ENCODE measurements at regions of chrX and their contacts with region 1.

Region 1: DNA sequence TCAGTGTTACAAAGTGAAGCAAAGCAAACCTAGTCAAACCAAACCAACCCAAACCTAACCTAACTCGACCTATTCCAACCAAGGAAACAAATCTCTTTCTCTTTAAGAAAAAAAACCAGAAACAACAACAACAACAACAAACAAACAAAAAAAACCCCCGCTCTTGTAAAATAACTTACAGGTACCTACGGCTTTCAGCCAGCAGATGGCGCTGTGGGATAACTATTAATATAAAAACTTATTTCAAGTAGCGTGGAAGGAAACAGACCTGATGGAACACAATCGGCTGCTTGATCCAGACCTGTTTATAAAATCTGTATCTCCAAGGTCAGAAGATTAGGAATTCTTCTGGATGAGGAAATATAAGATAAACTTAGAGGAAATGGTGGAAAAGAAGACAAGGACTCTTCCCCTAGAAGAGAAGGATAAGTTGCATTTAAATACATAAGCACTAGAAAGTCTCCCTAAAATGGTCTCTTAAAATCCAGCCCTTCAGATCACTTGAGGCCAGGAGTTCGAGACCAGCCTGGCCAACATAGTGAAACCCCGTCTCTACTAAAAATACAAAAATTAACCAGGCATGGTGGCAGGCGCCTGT is 34.4 kb upstream of the CDKL5 start:
- DNase-seq: peak; percentile 38 to 56
- H3K4me3 ChIP-seq: no peak overlapping the region
- H3K4me3 Mint-ChIP-seq: no peak overlapping the region
- H3K27ac Mint-ChIP-seq: no peak overlapping the region
- H3K4me1 ChIP-seq: no peaks in the 10 kb centered on the region
- H3K4me1 Mint-ChIP-seq: no peaks in the 10 kb centered on the region
- H3K27me3 ChIP-seq: no peaks in the 10 kb centered on the region
- H3K27me3 Mint-ChIP-seq: no peaks in the 10 kb centered on the region
- CTCF ChIP-seq: peak; percentile 53 to 60

Region 2: GRCh38 chrX:17944833-17945497 is 446.1 kb before region 1 on chrX:
- CTCF ChIA-PET with region 1: no interaction called
- POLR2A ChIA-PET with region 1: no interaction called
- intact Hi-C with region 1: no loop called
- DNase-seq: peak in 1 of 2 experiments; percentile 4
- H3K4me3 ChIP-seq: no peak overlapping the region
- H3K4me3 Mint-ChIP-seq: no peak overlapping the region
- H3K27ac Mint-ChIP-seq: no peak overlapping the region
- H3K4me1 ChIP-seq: no peaks in the 10 kb centered on the region
- H3K4me1 Mint-ChIP-seq: no peaks in the 10 kb centered on the region
- H3K27me3 ChIP-seq: no peaks in the 10 kb centered on the region
- H3K27me3 Mint-ChIP-seq: peaks cover 14% of the 10 kb centered on the region
- CTCF ChIP-seq: peak; percentile 30 to 36

Region 3: DNA sequence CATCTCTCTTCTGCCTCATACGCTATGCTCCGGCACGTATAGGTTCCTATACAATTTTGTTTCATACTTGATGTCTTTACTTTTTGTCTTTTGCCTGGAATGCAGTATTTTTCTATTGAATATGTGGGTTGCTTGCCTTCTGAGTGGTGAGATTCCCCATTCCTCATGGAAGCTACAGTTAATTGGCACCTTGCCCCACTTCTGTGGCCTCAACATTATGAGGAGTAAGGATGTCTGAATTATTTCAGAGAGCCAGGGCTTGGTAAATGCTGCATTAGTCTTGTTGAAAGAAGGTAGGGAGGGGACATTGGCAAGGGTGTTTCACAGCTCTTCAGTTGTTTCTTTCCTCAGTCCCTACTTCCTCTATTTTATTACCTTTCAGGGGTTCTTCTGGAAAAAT is 57.4 kb after region 1 on chrX:
- CTCF ChIA-PET with region 1: no interaction called
- POLR2A ChIA-PET with region 1: no interaction called
- intact Hi-C with region 1: no loop called
- DNase-seq: no peak
- H3K4me3 ChIP-seq: no peak overlapping the region
- H3K4me3 Mint-ChIP-seq: no peak overlapping the region
- H3K27ac Mint-ChIP-seq: no peak overlapping the region
- H3K4me1 ChIP-seq: no peaks in the 10 kb centered on the region
- H3K4me1 Mint-ChIP-seq: no peaks in the 10 kb centered on the region
- H3K27me3 ChIP-seq: no peaks in the 10 kb centered on the region
- H3K27me3 Mint-ChIP-seq: no peaks in the 10 kb centered on the region
- CTCF ChIP-seq: no peak

Region 4: GRCh38 chrX:18471296-18471695 is 80.3 kb after region 1 on chrX:
- CTCF ChIA-PET with region 1: no interaction called
- POLR2A ChIA-PET with region 1: no interaction called
- intact Hi-C with region 1: no loop called
- DNase-seq: no peak
- H3K4me3 ChIP-seq: no peak overlapping the region
- H3K4me3 Mint-ChIP-seq: no peak overlapping the region
- H3K27ac Mint-ChIP-seq: no peak overlapping the region
- H3K4me1 ChIP-seq: no peaks in the 10 kb centered on the region
- H3K4me1 Mint-ChIP-seq: no peaks in the 10 kb centered on the region
- H3K27me3 ChIP-seq: no peaks in the 10 kb centered on the region
- H3K27me3 Mint-ChIP-seq: no peaks in the 10 kb centered on the region
- CTCF ChIP-seq: no peak

Region 5: GRCh38 chrX:18640686-18641085 is 249.6 kb after region 1 on chrX:
- CTCF ChIA-PET with region 1: no interaction called
- POLR2A ChIA-PET with region 1: no interaction called
- intact Hi-C with region 1: loop called (anchors 10 kb)
- DNase-seq: peak; percentile 18 to 39
- H3K4me3 ChIP-seq: no peak overlapping the region
- H3K4me3 Mint-ChIP-seq: no peak overlapping the region
- H3K27ac Mint-ChIP-seq: no peak overlapping the region
- H3K4me1 ChIP-seq: no peaks in the 10 kb centered on the region
- H3K4me1 Mint-ChIP-seq: no peaks in the 10 kb centered on the region
- H3K27me3 ChIP-seq: no peaks in the 10 kb centered on the region
- H3K27me3 Mint-ChIP-seq: no peaks in the 10 kb centered on the region
- CTCF ChIP-seq: no peak

Region 6: DNA sequence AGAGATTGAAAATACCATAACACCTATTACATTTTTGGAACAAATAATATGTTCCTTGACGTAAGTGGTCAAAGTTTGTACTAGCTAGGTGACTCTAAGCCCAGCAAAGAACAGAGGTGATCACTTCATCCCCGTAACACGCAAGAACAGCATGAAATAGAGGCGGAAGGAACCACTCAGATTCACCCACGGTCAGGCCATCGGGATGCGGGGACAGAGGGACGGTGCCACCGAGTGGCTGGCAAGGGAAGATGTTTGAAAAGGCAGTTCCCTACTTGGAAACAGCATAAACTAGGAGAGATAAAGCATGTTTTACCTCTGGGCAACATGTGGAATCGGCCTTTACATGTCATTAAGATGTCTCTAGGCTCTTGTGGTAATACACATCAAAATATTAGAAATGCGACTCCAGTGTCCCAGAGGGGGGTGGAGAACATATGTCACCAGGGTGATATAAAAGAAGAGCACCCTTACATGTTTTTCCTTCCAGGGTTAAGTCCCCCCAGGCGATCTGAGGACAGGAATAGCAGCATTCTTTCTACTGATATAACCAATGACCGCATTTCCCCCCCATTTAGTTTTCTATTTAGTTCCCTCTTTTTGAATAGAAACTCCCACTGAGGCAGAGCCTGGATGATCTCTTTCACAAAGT is 508.9 kb after region 1 on chrX:
- CTCF ChIA-PET with region 1: interaction called, 3 read pairs
- POLR2A ChIA-PET with region 1: no interaction called
- intact Hi-C with region 1: loop called (anchors 5 kb)
- DNase-seq: peak in 1 of 2 experiments; percentile 57
- H3K4me3 ChIP-seq: no peak overlapping the region
- H3K4me3 Mint-ChIP-seq: no peak overlapping the region
- H3K27ac Mint-ChIP-seq: peak overlapping the region; percentile 84
- H3K4me1 ChIP-seq: peaks cover 10% of the 10 kb centered on the region
- H3K4me1 Mint-ChIP-seq: peaks cover 8% of the 10 kb centered on the region
- H3K27me3 ChIP-seq: no peaks in the 10 kb centered on the region
- H3K27me3 Mint-ChIP-seq: no peaks in the 10 kb centered on the region
- CTCF ChIP-seq: peak in 1 of 2 experiments; percentile 44

Region 7: GRCh38 chrX:19017271-19017670 is 626.2 kb after region 1 on chrX:
- CTCF ChIA-PET with region 1: no interaction called
- POLR2A ChIA-PET with region 1: no interaction called
- intact Hi-C with region 1: loop called (anchors 10 kb)
- DNase-seq: peak in 1 of 2 experiments; percentile 29
- H3K4me3 ChIP-seq: no peak overlapping the region
- H3K4me3 Mint-ChIP-seq: no peak overlapping the region
- H3K27ac Mint-ChIP-seq: no peak overlapping the region
- H3K4me1 ChIP-seq: no peaks in the 10 kb centered on the region
- H3K4me1 Mint-ChIP-seq: no peaks in the 10 kb centered on the region
- H3K27me3 ChIP-seq: no peaks in the 10 kb centered on the region
- H3K27me3 Mint-ChIP-seq: no peaks in the 10 kb centered on the region
- CTCF ChIP-seq: peak; percentile 56 to 82

Measured in Caco-2 (cell line).